ENCODE measurements at regions of chr12 and their contacts with region 1.

Region 1: GRCh38 chr12:27024291-27024690 is 1.9 kb downstream of the MED21 start:
- DNase-seq: no peak
- H3K4me3 Mint-ChIP-seq: peak overlapping the region; percentile 90
- H3K27ac Mint-ChIP-seq: no peak overlapping the region
- H3K4me1 Mint-ChIP-seq: peaks cover 36% of the 10 kb centered on the region
- H3K27me3 Mint-ChIP-seq: peaks cover 1% of the 10 kb centered on the region

Region 2: DNA sequence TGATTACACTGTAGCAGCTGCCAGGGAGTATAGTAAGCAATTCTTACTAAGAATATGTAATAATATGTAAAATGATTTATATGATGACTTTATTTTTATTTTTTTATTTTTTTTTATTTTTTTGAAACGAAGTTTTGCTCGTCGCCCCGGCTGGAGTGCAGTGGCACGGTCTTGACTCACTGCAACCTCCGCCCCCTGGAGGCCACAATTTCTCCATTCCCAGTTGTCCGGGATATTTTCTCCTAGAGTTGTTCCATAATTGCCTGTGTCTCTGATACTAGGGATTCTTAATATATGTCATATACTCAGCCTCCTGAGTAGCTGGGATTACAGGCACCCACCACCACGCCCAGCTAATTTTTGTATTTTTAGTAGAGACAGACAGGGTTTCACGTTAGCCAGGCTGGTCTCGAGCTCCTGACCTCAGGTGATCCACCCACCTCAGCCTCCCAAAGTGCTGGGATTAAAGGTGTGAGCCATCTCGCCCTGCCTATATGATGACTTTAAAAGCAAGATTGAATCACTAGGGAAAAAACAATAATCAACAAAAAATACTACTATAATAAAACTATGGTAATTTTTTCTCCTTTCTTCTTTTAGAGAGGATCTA is 179.1 kb before region 1 on chr12:
- intact Hi-C with region 1: no loop called
- DNase-seq: no peak
- H3K4me3 Mint-ChIP-seq: no peak overlapping the region
- H3K27ac Mint-ChIP-seq: no peak overlapping the region
- H3K4me1 Mint-ChIP-seq: peaks cover 7% of the 10 kb centered on the region
- H3K27me3 Mint-ChIP-seq: peaks cover 11% of the 10 kb centered on the region

Region 3: GRCh38 chr12:27123642-27124041 is 99.4 kb after region 1 on chr12:
- intact Hi-C with region 1: loop called (anchors 5 kb)
- DNase-seq: no peak
- H3K4me3 Mint-ChIP-seq: no peak overlapping the region
- H3K27ac Mint-ChIP-seq: no peak overlapping the region
- H3K4me1 Mint-ChIP-seq: peaks cover 2% of the 10 kb centered on the region
- H3K27me3 Mint-ChIP-seq: peaks cover 5% of the 10 kb centered on the region

Region 4: GRCh38 chr12:27193854-27194544 is 169.7 kb after region 1 on chr12:
- intact Hi-C with region 1: no loop called
- DNase-seq: no peak
- H3K4me3 Mint-ChIP-seq: no peak overlapping the region
- H3K27ac Mint-ChIP-seq: no peak overlapping the region
- H3K4me1 Mint-ChIP-seq: no peaks in the 10 kb centered on the region
- H3K27me3 Mint-ChIP-seq: no peaks in the 10 kb centered on the region